Activated CD4-positive, alpha-beta memory T cell treated with anti-CD3 and anti-CD28 coated beads for 36 hours (primary cell): ENCODE measurements at regions of chr3 and their contacts with region 1.

Region 1: DNA sequence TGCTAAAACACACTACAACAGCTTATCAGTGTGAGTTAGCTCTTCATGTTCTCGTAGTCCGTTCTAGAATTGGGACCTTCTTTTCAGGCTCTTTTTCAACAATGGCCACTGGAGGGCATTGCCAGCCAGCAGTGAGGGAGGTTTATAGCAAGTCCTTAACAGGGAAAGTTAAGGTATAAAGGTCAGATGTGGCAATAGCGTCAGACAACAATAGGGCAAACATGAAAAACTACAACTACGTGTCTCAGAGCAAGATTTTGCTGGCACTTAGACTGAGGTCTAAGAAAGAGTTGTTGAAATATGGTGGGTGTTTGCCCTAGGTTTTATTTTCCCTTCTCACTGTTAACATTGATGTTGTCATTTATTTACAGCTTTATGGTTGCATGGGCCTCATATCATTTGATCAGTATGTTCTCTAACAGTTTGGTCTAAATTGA is 161.4 kb downstream of the GMNC start:
- DNase-seq: peak; percentile 12
- H3K4me3 Mint-ChIP-seq: no peak overlapping the region
- H3K27ac Mint-ChIP-seq: no peak overlapping the region
- H3K4me1 Mint-ChIP-seq: no peaks in the 10 kb centered on the region
- H3K27me3 Mint-ChIP-seq: peaks cover 17% of the 10 kb centered on the region

Region 2: DNA sequence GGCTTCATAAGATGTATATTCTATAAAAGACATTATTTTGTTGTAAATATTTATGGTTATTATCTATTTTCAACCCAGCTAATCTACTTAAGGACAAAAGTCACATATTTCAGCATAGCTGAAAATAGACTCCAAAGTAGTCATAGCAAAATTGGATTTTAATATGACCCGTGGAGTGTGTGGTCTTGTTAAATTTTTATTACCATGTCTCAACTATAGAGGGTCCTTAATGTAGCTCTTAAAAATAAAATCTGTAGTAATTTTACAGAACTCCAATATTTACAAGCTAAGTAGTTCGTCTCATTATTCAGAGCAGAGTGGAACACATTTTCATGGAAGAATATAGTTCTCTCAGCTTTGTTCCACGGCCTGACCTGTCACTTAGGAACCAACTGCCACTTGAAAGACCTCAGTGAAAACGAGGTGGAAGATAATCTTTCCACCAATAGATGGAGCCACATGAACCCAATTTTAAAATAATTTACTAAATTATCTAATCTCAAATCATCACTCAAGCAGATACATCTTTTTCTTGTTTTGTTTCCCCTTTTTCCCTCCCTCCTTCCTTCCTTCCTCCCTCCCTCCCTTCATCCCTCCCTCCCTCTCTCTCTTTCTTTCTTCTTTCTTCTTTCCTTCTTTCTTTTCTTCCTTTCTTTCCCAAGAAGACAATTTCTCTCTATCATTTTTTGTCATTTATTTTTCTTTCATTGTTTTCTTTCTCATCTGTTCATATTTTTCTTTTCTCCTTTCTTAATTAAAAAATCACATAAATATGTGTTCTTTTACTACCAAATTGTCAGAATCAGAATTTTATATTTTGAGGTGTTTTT is 476.0 kb before region 1 on chr3:
- CTCF ChIA-PET with region 1: interaction called, 3 read pairs
- POLR2A ChIA-PET with region 1: no interaction called
- intact Hi-C with region 1: loop called (anchors 2 kb)
- DNase-seq: no peak
- H3K4me3 Mint-ChIP-seq: no peak overlapping the region
- H3K27ac Mint-ChIP-seq: no peak overlapping the region
- H3K4me1 Mint-ChIP-seq: peaks cover 2% of the 10 kb centered on the region
- H3K27me3 Mint-ChIP-seq: peaks cover 10% of the 10 kb centered on the region

Region 3: GRCh38 chr3:190384241-190384863 is 316.8 kb before region 1 on chr3:
- CTCF ChIA-PET with region 1: no interaction called
- POLR2A ChIA-PET with region 1: no interaction called
- intact Hi-C with region 1: loop called (anchors 1 kb)
- DNase-seq: peak; percentile 27
- H3K4me3 Mint-ChIP-seq: no peak overlapping the region
- H3K27ac Mint-ChIP-seq: no peak overlapping the region
- H3K4me1 Mint-ChIP-seq: peaks cover 4% of the 10 kb centered on the region
- H3K27me3 Mint-ChIP-seq: peaks cover 9% of the 10 kb centered on the region

Region 4: DNA sequence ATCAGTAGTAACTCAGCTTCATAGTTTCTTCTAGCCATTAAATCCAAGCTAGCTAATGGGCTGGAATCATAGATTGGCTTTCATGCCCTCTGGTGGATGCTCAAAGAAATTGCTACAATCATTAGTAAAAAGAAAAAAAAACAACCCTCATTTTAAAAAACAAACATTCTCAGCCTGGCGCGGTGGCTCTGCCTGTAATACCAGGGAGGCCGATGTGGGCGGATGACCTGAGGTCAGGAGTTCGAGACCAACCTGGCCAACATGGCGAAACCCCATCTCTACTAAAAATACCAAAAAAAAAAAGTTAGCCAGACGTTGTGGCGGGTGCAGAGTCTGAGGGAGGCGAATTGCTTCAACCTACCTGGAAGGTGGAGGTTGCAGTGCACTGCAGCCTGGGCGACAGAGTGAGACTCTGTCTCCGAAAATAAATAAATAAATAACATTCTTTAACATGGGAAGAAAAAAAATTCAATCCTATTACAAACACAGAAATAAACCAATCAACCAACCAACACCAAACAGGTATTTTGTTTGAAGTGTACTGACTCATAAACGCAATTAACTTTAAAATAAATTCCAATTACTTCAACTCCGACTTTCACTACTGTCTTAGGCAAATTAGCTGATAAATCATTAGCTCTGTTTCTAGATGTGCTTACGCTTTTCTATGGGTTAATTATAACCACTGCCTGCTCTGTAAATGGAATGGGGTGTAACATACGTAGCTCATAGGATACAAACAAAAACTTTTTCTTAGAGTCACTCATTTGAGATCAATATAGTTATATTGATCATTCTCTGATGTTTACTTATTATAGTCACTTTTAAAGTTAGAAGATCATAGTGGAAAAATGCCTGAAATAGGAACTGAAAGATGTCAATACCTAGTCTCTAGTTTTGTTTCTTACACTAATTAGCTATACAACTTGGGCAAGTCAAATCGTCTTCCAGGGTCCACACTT is 276.4 kb before region 1 on chr3:
- CTCF ChIA-PET with region 1: interaction called, 4 read pairs
- POLR2A ChIA-PET with region 1: interaction called, 5 read pairs
- intact Hi-C with region 1: loop called (anchors 5 kb)
- DNase-seq: peak; percentile 66
- H3K4me3 Mint-ChIP-seq: peak overlapping the region; percentile 24
- H3K27ac Mint-ChIP-seq: no peak overlapping the region
- H3K4me1 Mint-ChIP-seq: peaks cover 8% of the 10 kb centered on the region
- H3K27me3 Mint-ChIP-seq: no peaks in the 10 kb centered on the region

Region 5: GRCh38 chr3:190513409-190514162 is 187.5 kb before region 1 on chr3 and contains the start of gene IL1RAP:
- CTCF ChIA-PET with region 1: interaction called, 6 read pairs
- POLR2A ChIA-PET with region 1: no interaction called
- intact Hi-C with region 1: loop called (anchors 2 kb)
- DNase-seq: peak; percentile 90
- H3K4me3 Mint-ChIP-seq: peak within 1 kb of the TSS; percentile 86
- H3K27ac Mint-ChIP-seq: peak within 1 kb of the TSS; percentile 64
- H3K4me1 Mint-ChIP-seq: peaks cover 33% of the 10 kb centered on the region
- H3K27me3 Mint-ChIP-seq: no peaks in the 10 kb centered on the region
- total RNA-seq, gene IL1RAP: 14.8 to 15.8 TPM

Region 6: GRCh38 chr3:190585805-190586630 is 115.1 kb before region 1 on chr3:
- CTCF ChIA-PET with region 1: no interaction called
- POLR2A ChIA-PET with region 1: no interaction called
- intact Hi-C with region 1: loop called (anchors 10 kb)
- DNase-seq: peak; percentile 83
- H3K4me3 Mint-ChIP-seq: peak overlapping the region; percentile 64
- H3K27ac Mint-ChIP-seq: peak overlapping the region; percentile 95
- H3K4me1 Mint-ChIP-seq: peaks cover 27% of the 10 kb centered on the region
- H3K27me3 Mint-ChIP-seq: no peaks in the 10 kb centered on the region

Region 7: GRCh38 chr3:190721330-190721729 is 20.2 kb after region 1 on chr3:
- CTCF ChIA-PET with region 1: no interaction called
- POLR2A ChIA-PET with region 1: no interaction called
- intact Hi-C with region 1: no loop called
- DNase-seq: no peak
- H3K4me3 Mint-ChIP-seq: no peak overlapping the region
- H3K27ac Mint-ChIP-seq: no peak overlapping the region
- H3K4me1 Mint-ChIP-seq: no peaks in the 10 kb centered on the region
- H3K27me3 Mint-ChIP-seq: peaks cover 5% of the 10 kb centered on the region

Region 8: GRCh38 chr3:191051037-191051436 is 349.9 kb after region 1 on chr3:
- CTCF ChIA-PET with region 1: no interaction called
- POLR2A ChIA-PET with region 1: no interaction called
- intact Hi-C with region 1: loop called (anchors 2 kb)
- DNase-seq: no peak
- H3K4me3 Mint-ChIP-seq: no peak overlapping the region
- H3K27ac Mint-ChIP-seq: no peak overlapping the region
- H3K4me1 Mint-ChIP-seq: no peaks in the 10 kb centered on the region
- H3K27me3 Mint-ChIP-seq: no peaks in the 10 kb centered on the region